Astrocyte of the cerebellum (primary cell): ENCODE measurements at regions of chr17 and their contacts with region 1.

Region 1: GRCh38 chr17:21132428-21132827 is 5.7 kb downstream of the DHRS7B start:
- DNase-seq: no peak
- H3K4me3 ChIP-seq: no peak overlapping the region
- CTCF ChIP-seq: no peak

Region 2: GRCh38 chr17:21249920-21250703 is 117.7 kb after region 1 on chr17:
- in situ Hi-C with region 1: loop called (anchors 5 kb)
- DNase-seq: no peak
- H3K4me3 ChIP-seq: no peak overlapping the region
- CTCF ChIP-seq: no peak